ENCODE measurements at regions of chr6 and their contacts with region 1.

Region 1: DNA sequence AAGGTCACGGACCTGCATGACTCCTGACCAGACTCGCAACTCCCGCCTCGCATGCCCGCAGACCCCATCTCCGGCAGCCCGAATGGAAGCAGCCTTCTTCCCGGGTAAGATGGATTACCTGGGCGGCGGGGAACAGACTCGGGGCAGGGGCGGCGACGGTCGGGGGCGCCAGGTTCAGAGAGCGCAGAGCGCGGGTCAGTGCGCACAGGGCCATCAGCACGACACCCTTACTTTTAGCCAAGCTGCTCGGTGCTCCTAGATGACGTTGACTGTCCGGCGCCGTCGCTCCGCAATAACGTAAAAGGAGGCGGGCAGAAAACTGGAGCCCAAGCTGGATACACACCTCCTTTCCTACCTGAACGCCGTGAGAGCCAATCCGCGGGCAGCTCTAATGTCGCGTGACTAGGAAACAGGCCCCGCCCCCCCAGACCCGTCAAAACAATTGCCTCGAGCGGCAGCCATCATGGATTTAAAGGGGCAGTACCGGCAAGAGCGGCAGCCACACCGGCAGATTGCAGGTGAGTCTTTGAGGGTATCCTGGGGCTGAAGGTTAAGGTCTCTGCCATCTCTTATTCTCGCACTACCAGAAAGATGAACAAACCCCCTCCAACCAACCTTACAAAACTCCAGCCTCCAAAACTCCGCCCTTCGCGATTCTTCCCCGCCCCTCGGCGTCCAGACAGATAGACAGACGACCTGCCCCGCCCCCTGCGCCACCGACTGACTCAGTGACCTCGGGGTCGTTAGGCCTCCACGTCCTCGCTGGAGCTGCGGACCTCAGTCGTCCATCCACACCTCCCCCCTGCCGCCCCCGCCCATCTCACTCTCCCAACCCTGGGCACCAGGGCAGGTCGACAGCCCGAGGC is at the starts of genes KLC4 and MRPL2:
- DNase-seq: peak; percentile 96 to 99
- ATAC-seq: peak; percentile 95 to 99 (median 98)
- H3K4me3 ChIP-seq: peak within 1 kb of the TSS; percentile 73 to 96 (median 85)
- H3K27ac ChIP-seq: peak within 1 kb of the TSS; percentile 72 to 97 (median 89)
- H3K4me1 ChIP-seq: peaks cover 8 to 33% (median 30%) of the 10 kb centered on the region in 9 donors
- H3K27me3 ChIP-seq: no peaks in the 10 kb centered on the region
- CTCF ChIP-seq: no peak
- total RNA-seq, gene KLC4: 26.3 to 34.2 (median 28.3) TPM
- total RNA-seq, gene MRPL2: 76.0 to 139 (median 93.5) TPM

Region 2: GRCh38 chr6:42978839-42979522 is 80.4 kb before region 1 on chr6 and contains the start of gene PEX6:
- intact Hi-C with region 1: loop called in 1 of 10 experiments (anchors 2 kb)
- DNase-seq: peak; percentile 92 to 93
- ATAC-seq: peak; percentile 93 to 97 (median 96)
- H3K4me3 ChIP-seq: peak within 1 kb of the TSS; percentile 72 to 98 (median 90)
- H3K27ac ChIP-seq: peak within 1 kb of the TSS; percentile 81 to 97 (median 92)
- H3K4me1 ChIP-seq: peaks cover 7 to 54% (median 27%) of the 10 kb centered on the region in 9 donors
- H3K27me3 ChIP-seq: no peaks in the 10 kb centered on the region
- CTCF ChIP-seq: no peak
- total RNA-seq, gene PEX6: 11.2 to 32.6 (median 17.2) TPM

Region 3: DNA sequence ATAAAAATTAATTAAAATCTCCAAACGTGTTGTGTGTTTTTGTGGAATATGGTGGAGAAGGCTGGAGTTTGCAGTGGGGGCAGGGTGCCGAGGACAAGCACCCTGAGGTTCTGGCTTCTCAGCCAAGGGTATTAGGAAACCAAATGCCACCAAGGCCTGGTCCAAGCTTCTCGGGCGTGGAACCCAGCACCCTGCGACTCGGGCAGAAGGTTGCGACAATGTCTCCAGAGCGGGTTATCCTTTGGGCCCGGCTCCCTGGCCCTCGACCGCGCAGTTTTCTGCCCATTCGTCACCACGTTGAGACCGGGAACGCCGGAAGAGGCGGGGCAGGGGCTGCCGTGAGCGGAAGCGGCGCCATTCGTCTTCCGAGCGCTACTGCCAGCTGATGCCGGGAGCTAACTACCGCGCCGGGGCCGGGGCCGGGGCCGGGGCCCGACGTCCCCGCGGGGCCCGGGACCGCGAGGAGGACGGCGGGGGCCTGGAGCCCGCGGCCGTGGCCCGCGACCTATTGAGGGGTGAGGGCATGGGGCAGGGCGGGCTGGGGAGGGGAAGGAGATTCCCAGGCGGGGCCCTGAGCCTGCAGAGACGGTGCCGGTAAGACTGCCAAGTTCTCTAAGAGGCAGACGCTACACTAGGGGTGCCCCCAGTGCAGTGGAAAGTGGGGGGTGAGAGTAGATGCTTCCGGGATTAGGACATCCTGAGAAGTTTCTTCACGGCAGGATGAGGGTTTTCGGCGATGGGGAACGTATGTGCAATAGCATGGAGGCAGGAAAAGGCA is 37.9 kb before region 1 on chr6 and contains the start of gene RRP36:
- intact Hi-C with region 1: loop called in 3 of 10 experiments (anchors 5 kb)
- DNase-seq: peak; percentile 77 to 85
- ATAC-seq: peak; percentile 71 to 91 (median 84)
- H3K4me3 ChIP-seq: peak within 1 kb of the TSS; percentile 86 to 99 (median 94)
- H3K27ac ChIP-seq: peak within 1 kb of the TSS; percentile 64 to 97 (median 90)
- H3K4me1 ChIP-seq: peaks cover 5 to 67% (median 45%) of the 10 kb centered on the region in 9 donors
- H3K27me3 ChIP-seq: no peaks in the 10 kb centered on the region
- CTCF ChIP-seq: no peak
- total RNA-seq, gene RRP36: 21.4 to 35.3 (median 25.6) TPM

Region 4: DNA sequence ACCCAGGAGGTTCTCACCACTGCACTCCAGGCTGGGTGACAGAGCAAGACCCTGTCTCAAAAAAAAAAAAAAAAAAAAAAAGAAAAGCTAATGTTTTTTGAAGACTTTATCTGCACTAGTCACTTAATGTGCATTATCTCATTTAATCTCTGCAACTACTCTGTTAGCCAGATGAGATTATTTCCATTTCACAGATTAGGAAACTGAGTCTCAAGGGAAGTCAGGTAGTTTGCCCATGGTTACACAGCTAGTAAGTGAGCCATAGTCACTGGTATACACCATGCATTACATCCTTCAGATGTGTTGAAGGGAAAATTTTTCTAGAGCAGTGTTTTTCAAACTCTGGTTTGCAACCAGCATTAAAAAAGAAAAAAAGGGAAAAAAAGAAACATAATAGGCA is 104.5 kb after region 1 on chr6:
- intact Hi-C with region 1: no loop called
- DNase-seq: no peak
- ATAC-seq: no peak
- H3K4me3 ChIP-seq: no peak overlapping the region
- H3K27ac ChIP-seq: no peak overlapping the region
- H3K4me1 ChIP-seq: no peaks in the 10 kb centered on the region
- H3K27me3 ChIP-seq: no peaks in the 10 kb centered on the region
- CTCF ChIP-seq: no peak